Caco-2 (cell line): ENCODE measurements at regions of chr4 and their contacts with region 1.

Region 1: DNA sequence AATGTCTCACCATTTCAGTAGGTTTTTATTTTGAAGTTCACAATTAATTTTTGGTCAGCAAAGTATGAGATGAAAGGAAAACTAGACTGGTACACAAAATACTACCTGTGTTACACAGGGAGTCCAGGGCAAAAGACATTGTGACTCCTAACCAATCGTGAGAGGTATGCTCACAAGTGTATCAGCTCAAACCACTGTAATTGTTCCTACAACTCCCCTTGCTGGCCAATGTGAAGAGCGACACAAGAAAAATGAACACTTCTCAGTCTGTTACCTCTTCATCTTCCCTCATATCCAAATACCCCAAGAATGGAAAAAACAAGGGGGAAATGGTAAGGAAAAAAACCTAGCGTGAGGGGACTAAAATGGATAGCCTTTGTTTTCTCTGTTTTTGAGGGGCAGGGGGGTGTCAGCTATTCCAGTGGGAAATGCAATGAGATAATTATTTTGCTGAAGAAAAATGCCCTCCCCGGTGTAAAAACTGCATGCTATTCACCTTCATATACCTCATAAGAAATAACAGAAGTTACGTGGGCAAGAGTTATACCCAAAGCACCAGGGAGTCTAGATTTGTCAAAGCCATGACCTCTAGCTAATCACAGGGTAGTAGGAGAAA is 30.6 kb upstream of the NSUN7 start:
- DNase-seq: peak; percentile 41 to 54
- H3K4me3 ChIP-seq: no peak overlapping the region
- H3K4me3 Mint-ChIP-seq: no peak overlapping the region
- H3K27ac Mint-ChIP-seq: no peak overlapping the region
- H3K4me1 ChIP-seq: peaks cover 23% of the 10 kb centered on the region
- H3K4me1 Mint-ChIP-seq: no peaks in the 10 kb centered on the region
- H3K27me3 ChIP-seq: no peaks in the 10 kb centered on the region
- H3K27me3 Mint-ChIP-seq: no peaks in the 10 kb centered on the region
- CTCF ChIP-seq: peak; percentile 54 to 69

Region 2: GRCh38 chr4:40369437-40370274 is 349.5 kb before region 1 on chr4:
- CTCF ChIA-PET with region 1: no interaction called
- POLR2A ChIA-PET with region 1: no interaction called
- intact Hi-C with region 1: loop called (anchors 2 kb)
- DNase-seq: peak; percentile 50 to 75
- H3K4me3 ChIP-seq: no peak overlapping the region
- H3K4me3 Mint-ChIP-seq: no peak overlapping the region
- H3K27ac Mint-ChIP-seq: peak overlapping the region; percentile 56
- H3K4me1 ChIP-seq: peaks cover 28% of the 10 kb centered on the region
- H3K4me1 Mint-ChIP-seq: peaks cover 32% of the 10 kb centered on the region
- H3K27me3 ChIP-seq: no peaks in the 10 kb centered on the region
- H3K27me3 Mint-ChIP-seq: no peaks in the 10 kb centered on the region
- CTCF ChIP-seq: no peak

Region 3: DNA sequence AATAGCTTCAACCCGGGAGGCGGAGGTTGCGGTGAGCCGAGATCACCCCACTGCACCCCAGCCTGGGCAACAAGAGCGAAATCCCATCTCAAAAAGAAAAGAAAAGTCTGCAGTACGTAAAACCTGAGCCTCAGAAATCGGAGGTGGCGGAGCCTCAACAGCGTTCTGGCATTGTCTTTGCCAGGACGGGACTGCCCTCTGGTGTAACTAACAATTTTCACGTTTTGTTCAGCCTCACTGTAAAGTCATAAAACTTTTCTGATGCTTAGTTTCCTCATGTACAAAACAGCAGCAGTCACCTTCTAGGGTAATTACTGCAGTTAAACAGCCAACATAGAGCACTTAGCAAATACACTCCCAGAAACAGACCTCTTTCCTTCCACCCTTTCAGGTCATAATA is 211.1 kb before region 1 on chr4:
- CTCF ChIA-PET with region 1: no interaction called
- POLR2A ChIA-PET with region 1: no interaction called
- intact Hi-C with region 1: loop called (anchors 5 kb)
- DNase-seq: peak; percentile 40 to 42
- H3K4me3 ChIP-seq: no peak overlapping the region
- H3K4me3 Mint-ChIP-seq: no peak overlapping the region
- H3K27ac Mint-ChIP-seq: no peak overlapping the region
- H3K4me1 ChIP-seq: peaks cover 20% of the 10 kb centered on the region
- H3K4me1 Mint-ChIP-seq: peaks cover 12% of the 10 kb centered on the region
- H3K27me3 ChIP-seq: no peaks in the 10 kb centered on the region
- H3K27me3 Mint-ChIP-seq: no peaks in the 10 kb centered on the region
- CTCF ChIP-seq: peak in 1 of 2 experiments; percentile 25

Region 4: DNA sequence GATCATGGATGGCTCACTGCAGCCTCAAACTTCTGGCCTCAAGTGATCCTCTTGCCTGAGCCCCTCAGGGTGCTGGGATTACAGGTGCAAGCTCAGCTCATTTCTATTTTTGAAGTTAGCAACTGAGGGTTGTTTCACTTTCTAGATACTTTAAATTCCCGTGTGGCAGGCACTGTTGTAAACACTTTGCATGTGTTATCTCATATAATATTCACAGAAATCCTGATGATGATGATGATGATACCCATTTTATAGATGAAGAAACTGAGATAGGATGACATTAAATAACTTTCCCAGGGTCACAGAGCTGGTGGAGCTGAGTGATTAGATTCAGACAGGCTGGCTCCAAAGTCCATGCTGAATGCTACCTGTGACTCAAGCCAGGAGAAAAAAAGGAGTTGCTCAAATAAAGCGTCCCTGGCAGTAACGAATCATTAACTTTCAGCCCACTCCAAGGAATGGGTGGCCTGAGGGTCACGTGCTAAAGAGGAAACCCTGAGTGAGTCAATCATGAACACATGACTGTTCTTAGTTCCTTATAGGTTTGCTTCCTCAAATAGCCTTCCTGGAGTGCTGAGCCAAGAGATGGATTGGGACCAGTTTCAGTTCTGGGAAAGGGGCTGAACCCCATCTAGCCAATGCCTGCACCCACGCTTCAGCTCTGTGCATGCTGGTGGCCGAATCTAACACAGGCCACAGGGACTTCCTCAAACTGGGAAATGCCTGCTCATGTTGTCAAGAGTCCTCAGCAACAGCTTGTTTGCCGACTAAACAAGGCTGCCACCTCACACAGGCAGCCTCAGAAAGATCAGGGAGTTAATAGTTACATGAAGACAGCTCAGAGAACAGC is 142.3 kb before region 1 on chr4:
- CTCF ChIA-PET with region 1: interaction called, 4 read pairs
- POLR2A ChIA-PET with region 1: no interaction called
- intact Hi-C with region 1: loop called (anchors 2 kb)
- DNase-seq: peak; percentile 92 to 96
- H3K4me3 ChIP-seq: peak overlapping the region; percentile 14
- H3K4me3 Mint-ChIP-seq: peak overlapping the region; percentile 73
- H3K27ac Mint-ChIP-seq: peak overlapping the region; percentile 97
- H3K4me1 ChIP-seq: peaks cover 33% of the 10 kb centered on the region
- H3K4me1 Mint-ChIP-seq: peaks cover 45% of the 10 kb centered on the region
- H3K27me3 ChIP-seq: no peaks in the 10 kb centered on the region
- H3K27me3 Mint-ChIP-seq: no peaks in the 10 kb centered on the region
- CTCF ChIP-seq: no peak

Region 5: GRCh38 chr4:40672536-40673526 is 46.3 kb before region 1 on chr4:
- CTCF ChIA-PET with region 1: no interaction called
- POLR2A ChIA-PET with region 1: no interaction called
- intact Hi-C with region 1: loop called (anchors 5 kb)
- DNase-seq: peak; percentile 37 to 46
- H3K4me3 ChIP-seq: no peak overlapping the region
- H3K4me3 Mint-ChIP-seq: peak overlapping the region; percentile 52
- H3K27ac Mint-ChIP-seq: peak overlapping the region; percentile 84
- H3K4me1 ChIP-seq: peaks cover 38% of the 10 kb centered on the region
- H3K4me1 Mint-ChIP-seq: peaks cover 34% of the 10 kb centered on the region
- H3K27me3 ChIP-seq: no peaks in the 10 kb centered on the region
- H3K27me3 Mint-ChIP-seq: no peaks in the 10 kb centered on the region
- CTCF ChIP-seq: no peak

Region 6: GRCh38 chr4:40736910-40737309 is 17.8 kb after region 1 on chr4:
- CTCF ChIA-PET with region 1: no interaction called
- POLR2A ChIA-PET with region 1: no interaction called
- intact Hi-C with region 1: no loop called
- DNase-seq: no peak
- H3K4me3 ChIP-seq: no peak overlapping the region
- H3K4me3 Mint-ChIP-seq: no peak overlapping the region
- H3K27ac Mint-ChIP-seq: no peak overlapping the region
- H3K4me1 ChIP-seq: no peaks in the 10 kb centered on the region
- H3K4me1 Mint-ChIP-seq: no peaks in the 10 kb centered on the region
- H3K27me3 ChIP-seq: no peaks in the 10 kb centered on the region
- H3K27me3 Mint-ChIP-seq: no peaks in the 10 kb centered on the region
- CTCF ChIP-seq: peak in 1 of 2 experiments; percentile 21

Region 7: DNA sequence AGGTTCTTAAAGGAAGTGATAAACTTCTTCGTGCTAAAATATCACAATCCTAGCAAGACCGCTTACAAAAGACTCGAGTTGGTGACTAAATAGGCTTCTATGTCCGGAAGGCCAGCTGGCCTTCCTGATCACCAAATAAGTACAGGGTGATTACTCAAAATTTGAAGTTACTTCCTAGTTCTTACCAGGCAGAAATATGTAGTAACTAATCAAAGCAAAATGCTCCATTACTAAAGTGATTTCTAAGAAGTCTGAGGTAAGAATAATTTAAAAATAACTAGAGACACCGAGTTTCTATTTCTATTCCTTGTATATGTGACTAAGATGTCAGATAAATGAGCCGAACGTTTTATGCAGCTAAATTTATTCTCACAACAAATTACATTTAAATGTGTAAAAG is 92.8 kb after region 1 on chr4:
- CTCF ChIA-PET with region 1: no interaction called
- POLR2A ChIA-PET with region 1: no interaction called
- intact Hi-C with region 1: no loop called
- DNase-seq: no peak
- H3K4me3 ChIP-seq: no peak overlapping the region
- H3K4me3 Mint-ChIP-seq: no peak overlapping the region
- H3K27ac Mint-ChIP-seq: no peak overlapping the region
- H3K4me1 ChIP-seq: no peaks in the 10 kb centered on the region
- H3K4me1 Mint-ChIP-seq: no peaks in the 10 kb centered on the region
- H3K27me3 ChIP-seq: no peaks in the 10 kb centered on the region
- H3K27me3 Mint-ChIP-seq: no peaks in the 10 kb centered on the region
- CTCF ChIP-seq: no peak